ENCODE measurements at regions of chr9 and their contacts with region 1.

Region 1: GRCh38 chr9:120742951-120743416 is 28.7 kb upstream of the MEGF9 start:
- DNase-seq: peak; percentile 74
- H3K4me3 ChIP-seq: no peak overlapping the region
- H3K27ac ChIP-seq: no peak overlapping the region
- H3K4me1 ChIP-seq: no peaks in the 10 kb centered on the region
- H3K27me3 ChIP-seq: no peaks in the 10 kb centered on the region
- CTCF ChIP-seq: peak; percentile 73

Region 2: DNA sequence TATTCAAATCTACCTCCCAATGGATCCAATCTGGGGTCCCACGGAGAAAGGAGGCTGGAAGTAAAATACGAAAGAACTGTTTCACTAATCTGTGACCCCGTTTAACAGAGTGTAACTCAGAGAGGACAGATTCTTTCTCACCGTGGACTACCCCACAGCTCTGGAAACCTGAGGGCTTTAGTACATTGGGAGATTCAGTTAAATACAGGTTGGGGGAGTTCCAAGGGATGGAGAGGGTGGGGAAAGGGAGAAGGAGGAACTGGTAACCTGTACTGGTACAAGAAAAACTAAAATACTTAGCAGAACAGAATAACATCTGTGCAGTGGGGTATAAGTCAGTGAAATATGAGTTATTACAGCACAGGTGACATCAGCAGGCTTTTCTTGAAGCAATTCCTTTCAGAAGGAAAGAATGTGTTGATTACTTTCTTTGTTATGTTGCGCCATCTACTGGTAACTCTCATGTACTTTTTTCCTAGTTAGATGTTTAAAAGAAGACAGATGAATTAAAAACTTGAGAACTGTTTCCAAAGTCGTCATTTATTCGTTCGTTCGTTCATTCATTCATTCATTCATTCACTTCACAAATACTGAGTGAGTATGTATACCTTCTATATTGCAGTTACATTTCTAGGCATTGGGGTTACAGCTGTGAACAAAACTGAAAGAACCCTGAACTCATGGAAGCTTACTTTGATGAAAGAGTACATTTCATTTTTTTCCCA is 657.1 kb after region 1 on chr9:
- CTCF ChIA-PET with region 1: no interaction called
- POLR2A ChIA-PET with region 1: no interaction called
- intact Hi-C with region 1: loop called (anchors 5 kb)
- DNase-seq: peak; percentile 80
- H3K4me3 ChIP-seq: no peak overlapping the region
- H3K27ac ChIP-seq: no peak overlapping the region
- H3K4me1 ChIP-seq: no peaks in the 10 kb centered on the region
- H3K27me3 ChIP-seq: no peaks in the 10 kb centered on the region
- CTCF ChIP-seq: peak; percentile 70

Measured in A673 (cell line).